HAP-1 (cell line): ENCODE measurements at regions of chr14 and their contacts with region 1.

Region 1: GRCh38 chr14:52824507-52824906 is 33.1 kb upstream of the GNPNAT1 start:
- DNase-seq: no peak
- H3K4me3 ChIP-seq: no peak overlapping the region
- H3K4me1 ChIP-seq: peaks cover 17% of the 10 kb centered on the region
- H3K27me3 ChIP-seq: no peaks in the 10 kb centered on the region

Region 2: DNA sequence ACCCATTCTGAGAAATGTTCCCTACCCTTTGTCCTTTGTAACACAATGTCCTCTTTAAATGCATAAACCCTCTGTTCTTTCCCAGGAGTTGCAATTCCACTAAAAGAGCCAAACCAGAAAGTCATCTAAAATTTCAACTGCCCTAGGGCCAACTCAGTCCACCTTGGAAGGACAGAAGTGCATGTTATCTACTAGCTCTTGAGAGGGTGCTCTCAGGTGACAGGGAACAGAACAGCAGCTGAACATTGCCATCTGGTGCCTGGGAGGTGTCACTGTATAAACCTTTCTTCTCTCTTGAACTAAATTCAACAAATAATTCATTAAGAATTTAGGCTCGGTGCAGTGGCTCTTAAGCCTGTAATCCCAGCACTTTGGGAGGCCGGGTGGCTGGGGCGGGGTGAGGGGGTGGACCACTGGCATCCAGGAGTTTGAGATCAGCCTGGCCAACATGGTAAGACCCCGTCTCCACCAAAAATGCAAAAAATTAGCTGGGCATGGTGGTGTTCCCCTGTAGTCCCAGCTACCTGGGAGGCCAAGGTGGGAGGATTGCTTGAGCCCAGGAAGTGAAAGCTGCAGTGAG is 136.6 kb after region 1 on chr14:
- in situ Hi-C with region 1: loop called (anchors 5 kb)
- DNase-seq: peak; percentile 70 to 72
- H3K4me3 ChIP-seq: no peak overlapping the region
- H3K4me1 ChIP-seq: no peaks in the 10 kb centered on the region; the same call in 1 of the 2 replicates
- H3K27me3 ChIP-seq: no peaks in the 10 kb centered on the region

Region 3: GRCh38 chr14:53055003-53055402 is 230.5 kb after region 1 on chr14:
- in situ Hi-C with region 1: loop called (anchors 10 kb)
- DNase-seq: peak in 1 of 2 experiments; percentile 76
- H3K4me3 ChIP-seq: no peak overlapping the region
- H3K4me1 ChIP-seq: no peaks in the 10 kb centered on the region; the same call in 1 of the 2 replicates
- H3K27me3 ChIP-seq: no peaks in the 10 kb centered on the region